PC-9 (cell line): ENCODE measurements at regions of chr4 and their contacts with region 1.

Region 1: DNA sequence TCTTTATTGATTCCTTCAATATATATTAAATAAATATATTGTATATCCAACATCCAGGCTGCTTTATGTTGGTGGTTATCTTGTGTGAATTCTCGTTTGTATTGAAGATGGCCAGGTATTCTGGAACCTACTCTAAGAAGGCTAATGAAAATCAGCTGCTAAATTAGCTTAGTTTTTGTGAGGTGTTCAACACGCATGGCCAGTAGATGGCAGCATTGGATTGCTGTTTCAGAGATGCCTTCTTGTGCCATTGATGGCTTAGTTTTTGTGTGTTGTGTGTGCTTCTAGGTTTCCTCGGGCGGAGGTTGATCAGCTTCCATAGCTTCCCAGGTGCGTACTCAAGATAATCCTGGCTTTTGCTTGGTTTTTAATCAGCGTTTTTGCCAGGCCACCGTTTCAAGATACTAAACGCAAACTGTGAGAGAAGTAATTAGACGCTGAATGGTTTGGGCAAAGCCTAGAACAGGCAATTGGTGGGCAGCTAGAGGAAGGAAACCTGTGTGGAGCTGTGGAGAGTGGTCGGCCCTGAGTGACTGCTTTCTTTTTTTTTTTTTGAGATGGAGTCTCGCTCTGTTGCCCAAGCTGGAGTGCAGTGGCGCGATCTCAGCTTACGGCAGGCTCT is 15.1 kb downstream of the NOCT start:
- DNase-seq: peak; percentile 55 to 57
- H3K4me3 ChIP-seq: no peak overlapping the region
- H3K27ac ChIP-seq: no peak overlapping the region
- H3K4me1 ChIP-seq: no peaks in the 10 kb centered on the region
- H3K27me3 ChIP-seq: no peaks in the 10 kb centered on the region
- CTCF ChIP-seq: peak; percentile 81

Region 2: GRCh38 chr4:138650929-138651448 is 379.7 kb before region 1 on chr4:
- CTCF ChIA-PET with region 1: no interaction called
- POLR2A ChIA-PET with region 1: no interaction called
- intact Hi-C with region 1: no loop called
- DNase-seq: peak in 1 of 2 experiments; percentile 38
- H3K4me3 ChIP-seq: no peak overlapping the region
- H3K27ac ChIP-seq: 0 out of 2 replicates have a peak overlapping the region, but pooled peaks have one; percentile 16
- H3K4me1 ChIP-seq: peaks cover 10% of the 10 kb centered on the region
- H3K27me3 ChIP-seq: no peaks in the 10 kb centered on the region
- CTCF ChIP-seq: no peak

Region 3: GRCh38 chr4:138952411-138952810 is 78.3 kb before region 1 on chr4:
- CTCF ChIA-PET with region 1: interaction called, 11 read pairs
- POLR2A ChIA-PET with region 1: no interaction called
- intact Hi-C with region 1: no loop called
- DNase-seq: peak in 1 of 2 experiments; percentile 16
- H3K4me3 ChIP-seq: no peak overlapping the region
- H3K27ac ChIP-seq: no peak overlapping the region
- H3K4me1 ChIP-seq: peaks cover 47% of the 10 kb centered on the region
- H3K27me3 ChIP-seq: no peaks in the 10 kb centered on the region
- CTCF ChIP-seq: no peak

Region 4: DNA sequence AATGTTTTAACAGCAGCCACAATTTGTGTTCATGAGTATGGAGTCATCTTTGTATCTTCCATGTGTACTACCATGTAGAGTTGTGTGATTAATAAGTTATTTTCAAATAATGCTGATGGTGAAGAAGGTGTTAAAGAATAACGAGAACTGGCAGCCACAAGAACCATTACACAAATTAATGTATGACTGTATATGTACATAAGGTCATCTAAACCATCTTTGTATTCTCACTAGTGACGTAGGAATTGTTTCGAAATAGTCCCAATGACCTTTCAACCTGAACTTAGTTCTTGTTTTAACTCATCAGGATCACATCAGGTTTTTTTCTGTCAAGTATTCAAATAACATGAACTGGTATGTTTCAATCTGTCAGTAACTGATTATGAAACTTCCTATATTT is 63.4 kb before region 1 on chr4:
- CTCF ChIA-PET with region 1: no interaction called
- POLR2A ChIA-PET with region 1: no interaction called
- intact Hi-C with region 1: no loop called
- DNase-seq: peak in 1 of 2 experiments; percentile 46
- H3K4me3 ChIP-seq: no peak overlapping the region
- H3K27ac ChIP-seq: no peak overlapping the region
- H3K4me1 ChIP-seq: 0 out of 2 replicates have a peak, but pooled peaks cover 8% of the 10 kb centered on the region
- H3K27me3 ChIP-seq: no peaks in the 10 kb centered on the region
- CTCF ChIP-seq: no peak

Region 5: GRCh38 chr4:139083956-139084803 is 53.5 kb after region 1 on chr4:
- CTCF ChIA-PET with region 1: interaction called, 3 read pairs
- POLR2A ChIA-PET with region 1: no interaction called
- intact Hi-C with region 1: loop called (anchors 2 kb)
- DNase-seq: peak; percentile 65 to 81
- H3K4me3 ChIP-seq: peak overlapping the region; percentile 95
- H3K27ac ChIP-seq: peak overlapping the region; percentile 85
- H3K4me1 ChIP-seq: peaks cover 27% of the 10 kb centered on the region
- H3K27me3 ChIP-seq: no peaks in the 10 kb centered on the region
- CTCF ChIP-seq: no peak

Region 6: DNA sequence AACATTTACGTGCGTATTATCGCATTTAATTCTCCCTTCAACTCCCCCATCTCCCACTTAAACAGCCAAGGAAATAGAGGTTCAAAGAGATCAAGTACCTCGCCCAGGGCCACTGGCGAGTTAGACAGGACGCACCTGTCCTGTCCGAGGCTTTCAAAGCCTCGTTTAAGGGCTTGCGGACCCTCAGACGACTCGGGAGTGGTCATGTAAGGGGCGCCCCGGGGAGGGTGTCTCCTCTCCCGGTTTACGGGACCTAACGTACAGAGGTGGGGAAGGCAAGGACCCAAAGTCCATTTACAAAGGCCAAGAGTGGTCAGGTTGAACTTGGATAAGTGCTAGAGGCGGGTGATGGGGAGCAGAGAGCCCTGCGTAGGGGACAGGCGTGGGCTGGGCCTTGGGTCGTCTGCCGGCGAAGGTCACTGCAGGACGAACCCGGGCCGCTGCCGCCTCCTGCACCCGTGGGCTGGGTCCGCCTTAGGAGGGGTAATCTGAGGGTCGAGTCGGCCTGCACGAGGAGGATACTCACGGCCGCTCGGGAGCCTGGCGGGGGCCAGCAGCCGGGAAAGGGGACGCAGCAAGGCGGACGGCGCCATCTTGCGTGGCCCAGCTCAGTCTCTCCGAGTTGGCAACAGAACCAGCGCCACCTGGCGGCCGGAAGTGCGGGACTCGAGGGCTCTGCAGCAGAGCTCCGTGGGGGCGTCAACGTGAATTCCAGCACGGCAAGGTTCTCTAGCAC is 264.6 kb after region 1 on chr4:
- CTCF ChIA-PET with region 1: interaction called, 8 read pairs
- POLR2A ChIA-PET with region 1: no interaction called
- intact Hi-C with region 1: loop called (anchors 2 kb)
- DNase-seq: peak; percentile 66 to 91
- H3K4me3 ChIP-seq: peak overlapping the region; percentile 78
- H3K27ac ChIP-seq: no peak overlapping the region
- H3K4me1 ChIP-seq: peaks cover 21% of the 10 kb centered on the region
- H3K27me3 ChIP-seq: no peaks in the 10 kb centered on the region
- CTCF ChIP-seq: peak; percentile 85

Region 7: GRCh38 chr4:139509727-139510410 is 479.1 kb after region 1 on chr4:
- CTCF ChIA-PET with region 1: no interaction called
- POLR2A ChIA-PET with region 1: no interaction called
- intact Hi-C with region 1: loop called (anchors 10 kb)
- DNase-seq: no peak
- H3K4me3 ChIP-seq: no peak overlapping the region
- H3K27ac ChIP-seq: no peak overlapping the region
- H3K4me1 ChIP-seq: no peaks in the 10 kb centered on the region
- H3K27me3 ChIP-seq: no peaks in the 10 kb centered on the region
- CTCF ChIP-seq: no peak

Region 8: GRCh38 chr4:139645458-139645857 is 614.7 kb after region 1 on chr4:
- CTCF ChIA-PET with region 1: interaction called, 3 read pairs
- POLR2A ChIA-PET with region 1: interaction called, 14 read pairs
- intact Hi-C with region 1: loop called (anchors 2 kb)
- DNase-seq: peak; percentile 88 to 99
- H3K4me3 ChIP-seq: no peak overlapping the region
- H3K27ac ChIP-seq: peak overlapping the region; percentile 82
- H3K4me1 ChIP-seq: peaks cover 64% of the 10 kb centered on the region
- H3K27me3 ChIP-seq: no peaks in the 10 kb centered on the region
- CTCF ChIP-seq: no peak

Region 9: DNA sequence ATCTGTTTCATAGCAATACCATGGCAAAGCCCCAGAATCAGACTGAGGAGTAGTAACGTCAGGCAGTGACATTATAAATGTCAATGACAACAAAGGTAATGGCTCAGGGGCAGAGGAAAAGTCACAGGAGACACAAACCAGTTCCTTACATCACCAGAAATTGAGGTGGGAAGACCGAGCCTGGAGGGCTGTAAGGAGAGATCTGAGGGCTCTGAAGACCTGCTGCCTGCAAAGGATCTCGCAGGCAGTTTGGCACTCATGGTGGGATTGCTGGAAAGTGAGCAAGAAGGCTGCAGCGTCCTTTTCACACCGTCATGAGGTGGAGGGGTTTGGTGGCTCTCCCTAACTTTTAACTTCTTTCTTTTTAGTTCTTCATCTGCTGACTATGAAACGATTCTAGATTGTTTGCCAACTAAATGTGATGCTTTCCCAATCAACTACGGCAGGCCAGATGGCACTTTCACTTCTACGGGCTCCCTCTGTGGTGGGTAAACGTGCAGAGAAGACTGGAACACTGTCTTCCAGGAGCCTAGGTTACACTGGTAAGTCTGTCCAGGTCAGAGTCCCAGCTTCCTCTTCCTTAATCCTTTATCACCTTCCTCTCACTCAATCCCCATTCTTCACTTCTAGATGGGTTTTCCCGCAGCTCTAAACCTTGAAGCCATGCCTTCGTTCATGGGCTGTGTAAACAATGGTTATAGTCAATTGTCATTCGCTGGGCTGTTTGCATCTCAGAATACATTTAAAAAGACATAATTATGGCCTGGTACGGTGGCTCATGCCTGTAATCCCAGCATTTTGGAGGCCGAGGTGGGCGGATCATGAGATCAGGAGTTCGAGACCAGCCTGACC is 1667.2 kb after region 1 on chr4:
- CTCF ChIA-PET with region 1: interaction called, 12 read pairs
- POLR2A ChIA-PET with region 1: no interaction called
- intact Hi-C with region 1: no loop called
- DNase-seq: no peak
- H3K4me3 ChIP-seq: no peak overlapping the region
- H3K27ac ChIP-seq: no peak overlapping the region
- H3K4me1 ChIP-seq: no peaks in the 10 kb centered on the region
- H3K27me3 ChIP-seq: no peaks in the 10 kb centered on the region
- CTCF ChIP-seq: no peak